ENCODE measurements at regions of chr9 and their contacts with region 1.

Region 1: GRCh38 chr9:101311758-101312420 is 72.9 kb downstream of the BAAT start:
- DNase-seq: peak; percentile 56 to 85 (median 60)
- ATAC-seq: peak; percentile 96
- H3K4me3 ChIP-seq: no peak overlapping the region
- H3K27ac ChIP-seq: no peak overlapping the region
- H3K4me1 ChIP-seq: no peaks in the 10 kb centered on the region
- H3K27me3 ChIP-seq: peaks cover 0 to 10% of the 10 kb centered on the region in 2 experiments; a peak in 3 of 5 replicates
- CTCF ChIP-seq: peak; percentile 51 to 81 (median 59); a peak in 5 of 6 replicates
- EP300 ChIP-seq: no peak
- POLR2A ChIP-seq: no peak
- RAD21 ChIP-seq: peak; percentile 79 to 89

Region 2: DNA sequence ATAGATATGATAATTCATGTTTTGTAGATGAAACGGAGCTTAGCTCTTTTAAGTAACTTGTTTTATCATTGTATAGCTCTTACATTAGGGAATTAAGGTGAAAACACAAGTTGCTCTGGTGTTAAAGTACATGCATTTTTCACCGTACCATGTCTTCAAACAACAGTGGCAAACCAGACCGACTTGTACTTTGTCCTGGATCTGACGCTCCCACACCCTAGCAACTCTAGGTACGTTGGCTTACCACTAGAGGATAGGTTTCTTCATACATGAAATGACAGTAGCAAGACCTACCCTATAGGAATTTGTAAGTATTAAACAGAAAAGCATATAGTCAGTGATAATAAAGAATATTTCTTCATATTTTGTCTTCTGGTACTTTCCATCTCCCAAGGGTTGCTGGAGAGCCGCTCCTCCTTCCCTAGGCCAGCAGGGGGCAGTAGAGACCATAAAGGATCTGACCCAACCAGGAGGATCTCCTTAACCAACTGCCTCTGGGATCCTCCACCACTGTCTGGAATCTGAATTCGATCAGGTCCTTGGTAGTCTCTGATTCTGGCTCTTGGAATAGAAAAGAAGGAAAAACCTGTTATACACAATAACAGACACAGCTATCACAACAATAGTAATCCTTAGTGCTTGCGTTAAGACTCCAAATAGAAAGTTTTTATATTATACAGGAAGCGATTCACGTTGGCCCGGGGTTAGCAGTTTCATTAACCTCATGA is 597.4 kb before region 1 on chr9:
- CTCF ChIA-PET with region 1: interaction called, 5 read pairs
- POLR2A ChIA-PET with region 1: no interaction called
- in situ Hi-C with region 1: loop called (anchors 5 kb)
- intact Hi-C with region 1: loop called (anchors 1 kb)
- DNase-seq: peak; percentile 72 to 81 (median 76)
- ATAC-seq: peak; percentile 97
- H3K4me3 ChIP-seq: no peak overlapping the region
- H3K27ac ChIP-seq: no peak overlapping the region
- H3K4me1 ChIP-seq: no peaks in the 10 kb centered on the region
- H3K27me3 ChIP-seq: no peaks in the 10 kb centered on the region
- CTCF ChIP-seq: peak; percentile 64 to 85 (median 79)
- EP300 ChIP-seq: no peak
- POLR2A ChIP-seq: no peak
- RAD21 ChIP-seq: peak; percentile 74 to 75

Region 3: GRCh38 chr9:101119206-101119819 is 192.6 kb before region 1 on chr9:
- CTCF ChIA-PET with region 1: no interaction called
- POLR2A ChIA-PET with region 1: no interaction called
- in situ Hi-C with region 1: no loop called
- intact Hi-C with region 1: loop called (anchors 1 kb)
- DNase-seq: peak; percentile 29 to 47 (median 38)
- ATAC-seq: peak; percentile 88
- H3K4me3 ChIP-seq: no peak overlapping the region
- H3K27ac ChIP-seq: no peak overlapping the region
- H3K4me1 ChIP-seq: no peaks in the 10 kb centered on the region
- H3K27me3 ChIP-seq: no peaks in the 10 kb centered on the region
- CTCF ChIP-seq: peak; percentile 54 to 70 (median 54)
- EP300 ChIP-seq: no peak
- POLR2A ChIP-seq: no peak
- RAD21 ChIP-seq: peak; percentile 34 to 61

Region 4: GRCh38 chr9:101229606-101230005 is 82.3 kb before region 1 on chr9:
- CTCF ChIA-PET with region 1: no interaction called
- POLR2A ChIA-PET with region 1: no interaction called
- in situ Hi-C with region 1: no loop called
- intact Hi-C with region 1: loop called (anchors 2 kb)
- DNase-seq: no peak
- ATAC-seq: no peak
- H3K4me3 ChIP-seq: no peak overlapping the region
- H3K27ac ChIP-seq: no peak overlapping the region
- H3K4me1 ChIP-seq: no peaks in the 10 kb centered on the region
- H3K27me3 ChIP-seq: no peaks in the 10 kb centered on the region
- CTCF ChIP-seq: no peak
- EP300 ChIP-seq: no peak
- POLR2A ChIP-seq: no peak
- RAD21 ChIP-seq: no peak

Region 5: GRCh38 chr9:101387871-101388506 is 76.1 kb after region 1 on chr9:
- CTCF ChIA-PET with region 1: interaction called, 3 read pairs
- POLR2A ChIA-PET with region 1: no interaction called
- in situ Hi-C with region 1: no loop called
- intact Hi-C with region 1: loop called (anchors 1 kb)
- DNase-seq: peak in 2 of 4 experiments; percentile 33 to 76
- ATAC-seq: peak; percentile 98
- H3K4me3 ChIP-seq: no peak overlapping the region
- H3K27ac ChIP-seq: no peak overlapping the region
- H3K4me1 ChIP-seq: no peaks in the 10 kb centered on the region
- H3K27me3 ChIP-seq: no peaks in the 10 kb centered on the region
- CTCF ChIP-seq: peak; percentile 47 to 74 (median 55); a peak in 3 of 6 replicates
- EP300 ChIP-seq: no peak
- POLR2A ChIP-seq: no peak
- RAD21 ChIP-seq: peak; percentile 15 to 53; a peak in 2 of 4 replicates

Region 6: DNA sequence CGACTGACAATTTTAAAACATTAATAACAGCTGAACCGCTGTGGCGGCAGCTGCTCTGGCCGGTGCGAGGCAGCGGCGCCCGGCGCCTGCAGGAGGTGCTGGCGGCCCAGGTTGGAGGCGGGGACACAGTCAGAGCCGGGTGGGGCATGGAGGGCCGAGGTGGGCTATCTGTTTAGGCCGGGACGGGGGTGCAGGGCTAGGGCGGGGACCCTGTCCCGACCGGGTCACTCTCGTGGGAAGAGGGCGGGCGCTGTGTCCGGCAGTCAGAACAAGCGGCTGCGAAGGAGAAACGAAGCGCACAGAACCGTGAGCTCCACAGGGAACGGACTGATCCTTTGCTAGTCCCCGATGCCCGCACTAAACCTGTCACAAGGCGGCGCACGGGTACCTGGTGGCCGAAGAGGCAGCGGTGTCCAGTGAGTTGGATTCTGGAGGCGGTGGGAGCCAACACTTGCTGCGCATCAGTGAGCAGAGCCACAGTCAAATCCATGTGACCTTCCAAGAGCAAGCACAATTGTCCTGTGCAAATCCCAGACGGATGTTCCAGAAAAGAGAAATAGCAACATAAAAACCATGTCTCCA is 137.3 kb after region 1 on chr9:
- CTCF ChIA-PET with region 1: no interaction called
- POLR2A ChIA-PET with region 1: no interaction called
- in situ Hi-C with region 1: no loop called
- intact Hi-C with region 1: loop called (anchors 5 kb)
- DNase-seq: peak; percentile 72 to 86 (median 78)
- ATAC-seq: peak; percentile 100
- H3K4me3 ChIP-seq: peak overlapping the region; percentile 67
- H3K27ac ChIP-seq: 0 out of 3 replicates have a peak overlapping the region, but pooled peaks have one; percentile 26
- H3K4me1 ChIP-seq: peaks cover 0 to 6% of the 10 kb centered on the region in 2 experiments; a peak in 1 of 5 replicates
- H3K27me3 ChIP-seq: no peaks in the 10 kb centered on the region
- CTCF ChIP-seq: peak; percentile 65 to 85 (median 80)
- EP300 ChIP-seq: no peak
- POLR2A ChIP-seq: no peak
- RAD21 ChIP-seq: peak; percentile 63 to 66

Measured in K562 (cell line).